Right cardiac atrium (tissue), 5 donors: ENCODE measurements at regions of chr3 and their contacts with region 1.

Region 1: DNA sequence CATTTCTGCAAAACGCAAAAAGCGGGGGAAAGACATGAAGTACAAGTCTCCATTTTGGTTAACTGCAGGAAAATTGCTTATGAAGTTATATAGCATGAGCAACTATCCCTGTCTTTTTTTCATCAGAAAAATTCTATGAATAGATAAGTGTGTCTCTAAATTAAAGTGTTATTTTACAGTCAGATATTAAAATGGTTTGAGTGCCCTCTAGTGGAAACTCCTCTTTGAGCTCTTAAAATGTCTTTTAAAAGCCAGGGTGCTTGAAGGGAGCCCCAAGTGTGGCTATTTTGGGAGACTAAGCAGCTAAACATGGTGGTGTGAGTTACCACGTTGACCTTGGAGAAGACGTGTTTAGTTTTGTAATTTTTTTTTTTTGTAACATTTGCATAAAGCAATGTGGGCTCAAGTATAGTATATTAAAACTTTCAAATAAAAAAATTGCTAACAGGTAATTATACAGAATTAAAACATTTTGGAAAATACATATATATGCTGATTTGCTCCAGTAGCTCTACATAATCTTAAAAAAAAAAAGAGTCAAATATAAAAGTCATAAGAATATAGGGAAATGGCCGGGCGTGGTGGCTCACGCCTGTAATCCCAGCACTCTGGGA is 77.2 kb downstream of the PPP2R3A start:
- DNase-seq: no peak
- ATAC-seq: peak; percentile 42 to 63
- H3K4me3 ChIP-seq: no peak overlapping the region
- H3K27ac ChIP-seq: no peak overlapping the region
- H3K4me1 ChIP-seq: no peaks in the 10 kb centered on the region
- H3K27me3 ChIP-seq: no peaks in the 10 kb centered on the region

Region 2: DNA sequence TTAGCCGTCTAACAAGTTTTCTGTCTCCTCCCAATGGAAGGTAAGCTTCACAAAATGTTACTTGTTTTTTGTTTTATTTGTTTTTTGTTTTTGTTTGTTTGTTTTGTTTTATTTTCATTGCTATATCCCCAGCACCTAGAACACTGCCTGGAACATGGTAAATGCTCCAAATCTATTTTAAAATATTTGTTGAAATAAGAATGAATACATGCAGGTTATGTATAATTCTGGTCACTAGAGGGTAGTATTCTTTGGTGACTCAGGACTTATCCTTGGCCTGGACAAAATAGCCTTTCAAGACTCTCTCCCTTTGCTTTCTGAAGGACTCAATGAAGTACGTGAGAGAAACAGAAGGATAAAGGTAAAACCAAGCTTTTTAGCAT is 124.1 kb before region 1 on chr3:
- intact Hi-C with region 1: loop called (anchors 5 kb)
- DNase-seq: no peak
- ATAC-seq: peak in 1 of 2 donors; percentile 63
- H3K4me3 ChIP-seq: no peak overlapping the region
- H3K27ac ChIP-seq: no peak overlapping the region
- H3K4me1 ChIP-seq: no peaks in the 10 kb centered on the region
- H3K27me3 ChIP-seq: no peaks in the 10 kb centered on the region